ENCODE measurements at regions of chr19 and their contacts with region 1.

Region 1: DNA sequence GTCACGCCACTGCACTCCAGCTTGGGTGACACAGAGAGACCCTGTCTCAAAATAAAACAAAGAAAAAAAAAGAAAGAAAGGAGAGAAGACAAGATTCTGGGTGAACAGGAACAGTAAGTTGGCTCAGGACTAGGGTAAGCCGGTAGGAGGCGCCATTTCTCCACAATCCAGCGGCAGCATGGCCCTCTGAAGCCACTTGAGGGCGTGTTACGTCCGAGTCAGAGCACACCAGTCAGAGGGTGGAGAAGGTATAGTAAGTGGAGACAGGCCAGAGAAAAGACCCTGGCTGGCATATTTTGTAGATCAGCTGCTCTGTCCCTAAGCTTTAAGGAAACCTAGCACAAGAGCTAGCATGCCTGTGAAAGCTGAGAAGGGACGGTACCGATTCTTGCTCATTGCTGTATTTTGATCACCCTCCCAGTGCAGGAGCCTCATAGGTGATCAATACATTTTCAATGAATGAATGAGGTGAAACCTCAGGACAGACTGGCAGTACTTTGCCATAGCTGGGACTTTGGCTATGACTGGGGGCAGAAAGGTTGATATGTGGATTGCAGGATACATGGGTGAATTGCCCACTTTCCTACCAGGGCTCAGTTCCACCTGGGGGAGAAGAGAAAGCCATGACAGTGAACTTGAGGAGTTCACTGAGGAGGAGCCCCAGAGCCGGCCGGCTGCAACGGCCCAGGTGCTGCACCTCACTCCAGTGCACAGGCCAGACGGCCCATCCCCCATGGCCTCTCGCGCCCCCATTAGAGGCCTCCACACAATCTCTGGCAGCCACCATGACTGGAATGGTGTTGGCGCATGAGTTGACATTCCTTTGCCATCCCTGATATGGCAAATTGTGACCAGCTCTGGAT is 23.5 kb downstream of the POU2F2 start:
- DNase-seq: peak; percentile 91
- ATAC-seq: peak; percentile 96
- H3K4me3 Mint-ChIP-seq: no peak overlapping the region
- H3K27ac Mint-ChIP-seq: no peak overlapping the region; the same call in 1 of the 2 replicates
- H3K4me1 Mint-ChIP-seq: peaks cover 13% of the 10 kb centered on the region
- H3K27me3 Mint-ChIP-seq: peaks cover 24% of the 10 kb centered on the region
- CTCF ChIP-seq: peak; percentile 95

Region 2: DNA sequence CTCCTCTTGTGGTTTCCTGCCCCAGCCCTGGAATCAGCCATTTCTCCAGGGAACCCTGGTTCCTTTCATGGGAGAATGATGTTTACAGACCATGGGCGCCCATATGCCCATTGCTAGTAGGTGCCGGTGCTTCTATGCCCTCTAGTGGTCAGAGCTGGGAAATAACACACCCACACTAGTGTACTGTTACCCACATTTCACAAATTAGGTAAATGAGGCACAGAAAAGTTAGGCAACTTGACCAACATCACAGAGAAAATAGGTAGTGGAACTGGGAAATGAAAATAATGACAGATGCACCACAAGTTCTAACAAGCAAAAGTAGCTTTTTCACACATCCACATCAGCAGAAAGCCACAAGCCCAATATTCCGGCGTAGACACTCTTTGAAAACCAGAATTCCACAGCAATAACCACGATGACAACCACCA is 313.7 kb before region 1 on chr19:
- CTCF ChIA-PET with region 1: no interaction called
- POLR2A ChIA-PET with region 1: no interaction called
- DNase-seq: peak; percentile 76
- ATAC-seq: peak; percentile 93
- H3K4me3 Mint-ChIP-seq: no peak overlapping the region
- H3K27ac Mint-ChIP-seq: no peak overlapping the region
- H3K4me1 Mint-ChIP-seq: peaks cover 4% of the 10 kb centered on the region
- H3K27me3 Mint-ChIP-seq: peaks cover 11% of the 10 kb centered on the region
- CTCF ChIP-seq: peak; percentile 86

Region 3: GRCh38 chr19:42095814-42096230 is 12.9 kb before region 1 on chr19:
- CTCF ChIA-PET with region 1: interaction called, 23 read pairs
- POLR2A ChIA-PET with region 1: no interaction called
- DNase-seq: peak; percentile 94
- ATAC-seq: peak; percentile 86
- H3K4me3 Mint-ChIP-seq: peak overlapping the region; percentile 65
- H3K27ac Mint-ChIP-seq: no peak overlapping the region
- H3K4me1 Mint-ChIP-seq: peaks cover 15% of the 10 kb centered on the region
- H3K27me3 Mint-ChIP-seq: peaks cover 20% of the 10 kb centered on the region
- CTCF ChIP-seq: no peak

Region 4: GRCh38 chr19:42122691-42123607 is 14.2 kb after region 1 on chr19:
- CTCF ChIA-PET with region 1: interaction called, 34 read pairs
- POLR2A ChIA-PET with region 1: no interaction called
- DNase-seq: no peak
- ATAC-seq: no peak
- H3K4me3 Mint-ChIP-seq: no peak overlapping the region
- H3K27ac Mint-ChIP-seq: no peak overlapping the region
- H3K4me1 Mint-ChIP-seq: peaks cover 12% of the 10 kb centered on the region
- H3K27me3 Mint-ChIP-seq: 0 out of 2 replicates have a peak, but pooled peaks cover 4% of the 10 kb centered on the region
- CTCF ChIP-seq: no peak

Region 5: DNA sequence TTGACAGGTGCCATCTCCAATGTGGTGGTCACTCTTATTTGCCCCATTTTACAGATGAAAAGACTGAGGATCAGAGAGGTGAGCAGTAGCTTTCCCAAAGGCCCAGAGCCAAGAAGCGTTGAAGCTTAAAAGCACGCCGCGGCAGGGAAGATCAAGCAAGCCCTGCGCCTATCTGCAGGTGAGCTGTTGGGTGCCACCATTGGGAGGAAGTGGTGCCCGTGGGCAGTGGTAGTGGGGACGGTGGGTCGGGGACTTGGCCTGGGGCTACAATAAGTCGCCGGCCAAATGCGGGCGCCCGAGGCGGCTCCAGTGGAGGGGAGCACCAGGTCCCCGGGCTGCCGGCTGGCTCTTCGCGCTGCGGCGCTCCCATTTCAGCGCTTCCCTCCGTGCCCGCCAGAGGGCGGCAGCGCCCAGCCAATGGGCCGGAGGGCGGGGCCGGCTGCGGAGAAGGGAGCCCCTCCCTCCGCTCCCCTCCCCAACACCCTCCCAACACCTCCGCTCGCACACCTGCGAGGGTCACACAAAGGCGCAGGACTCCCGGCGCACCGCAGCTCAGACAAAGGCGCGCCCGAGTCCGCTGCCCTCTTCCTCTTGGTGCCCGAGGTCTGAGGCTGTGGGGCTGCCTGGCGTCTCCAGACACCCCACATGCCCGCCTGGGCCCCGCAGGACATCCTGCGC is 24.2 kb after region 1 on chr19:
- CTCF ChIA-PET with region 1: interaction called, 52 read pairs
- POLR2A ChIA-PET with region 1: interaction called, 3 read pairs
- DNase-seq: peak; percentile 91
- ATAC-seq: peak; percentile 86
- H3K4me3 Mint-ChIP-seq: peak overlapping the region; percentile 76
- H3K27ac Mint-ChIP-seq: no peak overlapping the region
- H3K4me1 Mint-ChIP-seq: peaks cover 20% of the 10 kb centered on the region
- H3K27me3 Mint-ChIP-seq: peaks cover 30% of the 10 kb centered on the region
- CTCF ChIP-seq: peak; percentile 91

Region 6: DNA sequence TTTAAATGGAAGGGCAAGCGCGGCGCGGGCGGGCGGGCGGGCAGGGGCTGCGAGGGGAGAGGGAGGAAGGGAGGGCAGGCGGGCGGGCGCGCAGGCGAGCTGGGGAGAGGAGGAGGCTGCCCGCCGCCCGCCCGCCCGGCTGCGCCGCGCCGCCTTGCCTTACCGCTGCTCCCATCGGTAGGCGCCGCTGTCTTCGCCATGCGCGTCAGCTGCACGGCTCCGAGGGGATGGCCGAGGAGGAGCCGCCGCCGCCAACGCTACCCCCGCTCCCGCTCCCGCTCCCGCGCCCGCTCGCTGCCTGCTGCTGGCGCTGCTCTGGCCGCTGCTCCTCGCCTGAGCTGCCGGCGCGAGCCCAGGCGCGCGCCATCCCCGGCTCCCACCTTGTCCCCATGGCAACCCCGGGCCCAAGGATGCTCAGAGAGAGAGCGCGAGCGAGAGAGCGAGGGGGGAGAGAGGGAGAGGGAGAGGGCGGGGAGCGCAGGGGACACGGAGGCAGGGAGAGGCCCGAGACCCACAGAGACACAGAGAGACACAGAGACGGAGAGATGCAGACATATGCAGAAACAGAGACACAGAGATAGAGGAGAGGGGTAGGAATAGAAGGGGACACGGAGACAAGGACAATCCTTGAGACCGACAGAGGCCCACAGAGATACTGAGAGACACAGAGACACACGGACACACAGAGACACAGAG is 68.4 kb after region 1 on chr19:
- CTCF ChIA-PET with region 1: interaction called, 21 read pairs
- POLR2A ChIA-PET with region 1: interaction called, 3 read pairs
- DNase-seq: peak; percentile 85
- ATAC-seq: peak; percentile 84
- H3K4me3 Mint-ChIP-seq: no peak overlapping the region
- H3K27ac Mint-ChIP-seq: no peak overlapping the region
- H3K4me1 Mint-ChIP-seq: peaks cover 18% of the 10 kb centered on the region
- H3K27me3 Mint-ChIP-seq: peaks cover 44% of the 10 kb centered on the region
- CTCF ChIP-seq: no peak

Region 7: DNA sequence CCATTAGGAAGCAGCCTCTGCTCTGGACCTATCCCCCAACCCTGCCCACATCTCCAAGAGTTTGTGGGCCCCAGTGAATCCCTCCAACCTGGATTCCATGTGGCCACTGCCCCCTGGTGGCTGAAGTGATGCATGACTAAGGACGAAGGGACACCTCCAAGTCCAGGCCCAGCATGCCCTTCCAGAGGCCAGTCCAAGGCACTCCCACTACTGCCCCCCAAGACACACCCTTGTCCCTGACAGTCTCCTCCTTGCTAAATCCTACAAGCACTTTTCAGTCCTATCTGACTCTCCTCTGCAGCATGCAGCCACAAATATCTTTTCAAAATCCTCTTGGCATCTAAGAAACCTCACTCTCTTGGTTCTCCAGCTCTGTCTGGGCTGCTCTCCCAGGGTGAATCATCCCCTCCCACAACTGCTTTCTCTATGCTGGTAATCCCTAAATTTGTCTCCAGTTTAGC is 75.7 kb after region 1 on chr19:
- CTCF ChIA-PET with region 1: interaction called, 16 read pairs
- POLR2A ChIA-PET with region 1: no interaction called
- DNase-seq: peak; percentile 96
- ATAC-seq: peak; percentile 93
- H3K4me3 Mint-ChIP-seq: no peak overlapping the region
- H3K27ac Mint-ChIP-seq: no peak overlapping the region
- H3K4me1 Mint-ChIP-seq: peaks cover 8% of the 10 kb centered on the region
- H3K27me3 Mint-ChIP-seq: peaks cover 19% of the 10 kb centered on the region
- CTCF ChIP-seq: peak; percentile 93

Region 8: GRCh38 chr19:42244347-42245220 is 135.8 kb after region 1 on chr19:
- CTCF ChIA-PET with region 1: interaction called, 15 read pairs
- POLR2A ChIA-PET with region 1: interaction called, 3 read pairs
- DNase-seq: peak; percentile 95
- ATAC-seq: peak; percentile 19
- H3K4me3 Mint-ChIP-seq: peak overlapping the region; percentile 89
- H3K27ac Mint-ChIP-seq: peak overlapping the region; percentile 97
- H3K4me1 Mint-ChIP-seq: peaks cover 35% of the 10 kb centered on the region
- H3K27me3 Mint-ChIP-seq: no peaks in the 10 kb centered on the region
- CTCF ChIP-seq: no peak

Region 9: DNA sequence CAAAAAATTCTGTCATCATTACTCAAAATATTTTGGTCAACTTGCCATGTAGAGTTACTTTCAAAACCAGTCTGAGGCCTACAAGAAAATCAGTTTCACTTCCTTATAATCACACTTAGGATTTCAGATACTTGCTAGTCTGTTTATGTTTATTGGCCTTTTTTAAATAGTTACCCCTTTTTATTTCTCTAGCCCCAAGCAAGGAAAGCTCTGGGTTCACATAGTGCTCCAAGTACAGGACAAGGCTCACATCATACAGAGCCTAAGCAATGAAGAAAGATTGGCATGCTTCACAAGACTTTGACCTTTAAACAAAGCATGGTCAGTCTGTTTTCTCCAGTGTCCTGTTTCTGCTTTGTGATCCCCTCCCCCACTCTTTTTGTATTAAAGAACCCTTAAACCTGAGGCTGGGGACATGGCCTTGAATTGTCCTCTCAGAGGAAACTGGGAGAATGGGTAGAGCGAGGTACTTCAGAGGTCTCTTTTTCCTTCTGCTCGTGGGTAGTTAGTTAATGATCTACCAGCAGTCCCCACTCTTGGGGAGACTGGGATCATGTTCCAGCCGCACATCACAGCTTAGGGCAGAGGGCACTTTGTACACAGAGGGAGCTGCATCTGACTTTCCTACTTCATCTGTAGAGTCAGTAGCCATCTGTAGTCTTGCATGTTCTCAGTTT is 388.9 kb after region 1 on chr19:
- CTCF ChIA-PET with region 1: no interaction called
- POLR2A ChIA-PET with region 1: no interaction called
- DNase-seq: no peak
- ATAC-seq: no peak
- H3K4me3 Mint-ChIP-seq: no peak overlapping the region
- H3K27ac Mint-ChIP-seq: no peak overlapping the region
- H3K4me1 Mint-ChIP-seq: peaks cover 35% of the 10 kb centered on the region
- H3K27me3 Mint-ChIP-seq: peaks cover 7% of the 10 kb centered on the region; the same call in 1 of the 2 replicates
- CTCF ChIP-seq: no peak

Measured in WTC11 (cell line).